HCT116 (cell line): ENCODE measurements at regions of chr6 and their contacts with region 1.

Region 1: GRCh38 chr6:45922728-45923351 is 92.8 kb downstream of the CLIC5 start:
- DNase-seq: peak; percentile 52
- ATAC-seq: peak; percentile 93
- H3K4me3 ChIP-seq: no peak overlapping the region
- H3K27ac ChIP-seq: no peak overlapping the region
- H3K4me1 ChIP-seq: no peaks in the 10 kb centered on the region
- H3K27me3 ChIP-seq: no peaks in the 10 kb centered on the region
- CTCF ChIP-seq: peak; percentile 67 to 88 (median 81)
- POLR2A ChIP-seq: no peak
- RAD21 ChIP-seq: peak; percentile 95

Region 2: GRCh38 chr6:44593539-44593944 is 1329.3 kb before region 1 on chr6:
- CTCF ChIA-PET with region 1: interaction called, 23 read pairs
- POLR2A ChIA-PET with region 1: no interaction called
- RAD21 ChIA-PET with region 1: no interaction called
- intact Hi-C with region 1: loop called (anchors 1 kb)
- DNase-seq: peak; percentile 54
- ATAC-seq: peak; percentile 96
- H3K4me3 ChIP-seq: no peak overlapping the region
- H3K27ac ChIP-seq: no peak overlapping the region
- H3K4me1 ChIP-seq: no peaks in the 10 kb centered on the region
- H3K27me3 ChIP-seq: no peaks in the 10 kb centered on the region
- CTCF ChIP-seq: peak; percentile 43 to 71 (median 62); a peak in 5 of 6 replicates
- POLR2A ChIP-seq: no peak
- RAD21 ChIP-seq: peak; percentile 67

Region 3: GRCh38 chr6:45421709-45422502 is 500.9 kb before region 1 on chr6:
- CTCF ChIA-PET with region 1: interaction called, 3 read pairs
- POLR2A ChIA-PET with region 1: no interaction called
- RAD21 ChIA-PET with region 1: no interaction called
- intact Hi-C with region 1: loop called (anchors 5 kb)
- DNase-seq: no peak
- ATAC-seq: peak; percentile 64
- H3K4me3 ChIP-seq: peak overlapping the region; percentile 53 to 73
- H3K27ac ChIP-seq: peak overlapping the region; percentile 33; the same call in 1 of the 2 replicates
- H3K4me1 ChIP-seq: peaks cover 8 to 36% of the 10 kb centered on the region in 2 experiments
- H3K27me3 ChIP-seq: peaks cover 18% of the 10 kb centered on the region
- CTCF ChIP-seq: peak in 2 of 3 experiments; percentile 14 to 15; a peak in 2 of 6 replicates
- POLR2A ChIP-seq: no peak
- RAD21 ChIP-seq: peak; percentile 41